Natural killer cell (primary cell): ENCODE measurements at regions of chr5 and their contacts with region 1.

Region 1: GRCh38 chr5:12023614-12024241 is 119.5 kb upstream of the CTNND2 start:
- DNase-seq: peak in 1 of 2 donors; percentile 4
- ATAC-seq: peak in 1 of 3 donors; percentile 35
- H3K4me3 ChIP-seq: no peak overlapping the region
- H3K4me3 Mint-ChIP-seq: no peak overlapping the region
- H3K27ac ChIP-seq: no peak overlapping the region
- H3K27ac Mint-ChIP-seq: no peak overlapping the region
- H3K4me1 ChIP-seq: no peaks in the 10 kb centered on the region
- H3K4me1 Mint-ChIP-seq: no peaks in the 10 kb centered on the region
- H3K27me3 ChIP-seq: no peaks in the 10 kb centered on the region
- H3K27me3 Mint-ChIP-seq: no peaks in the 10 kb centered on the region
- CTCF ChIP-seq: peak; percentile 61

Region 2: GRCh38 chr5:10987930-10988504 is 1035.7 kb before region 1 on chr5:
- intact Hi-C with region 1: loop called (anchors 5 kb)
- DNase-seq: peak; percentile 57 to 62
- ATAC-seq: peak; percentile 63 to 91 (median 65)
- H3K4me3 ChIP-seq: no peak overlapping the region
- H3K4me3 Mint-ChIP-seq: no peak overlapping the region
- H3K27ac ChIP-seq: no peak overlapping the region
- H3K27ac Mint-ChIP-seq: no peak overlapping the region
- H3K4me1 ChIP-seq: peaks cover 7% of the 10 kb centered on the region
- H3K4me1 Mint-ChIP-seq: peaks cover 11 to 16% of the 10 kb centered on the region in 2 donors
- H3K27me3 ChIP-seq: peaks cover 2% of the 10 kb centered on the region
- H3K27me3 Mint-ChIP-seq: peaks cover 19 to 20% of the 10 kb centered on the region in 2 donors
- CTCF ChIP-seq: peak; percentile 70

Region 3: DNA sequence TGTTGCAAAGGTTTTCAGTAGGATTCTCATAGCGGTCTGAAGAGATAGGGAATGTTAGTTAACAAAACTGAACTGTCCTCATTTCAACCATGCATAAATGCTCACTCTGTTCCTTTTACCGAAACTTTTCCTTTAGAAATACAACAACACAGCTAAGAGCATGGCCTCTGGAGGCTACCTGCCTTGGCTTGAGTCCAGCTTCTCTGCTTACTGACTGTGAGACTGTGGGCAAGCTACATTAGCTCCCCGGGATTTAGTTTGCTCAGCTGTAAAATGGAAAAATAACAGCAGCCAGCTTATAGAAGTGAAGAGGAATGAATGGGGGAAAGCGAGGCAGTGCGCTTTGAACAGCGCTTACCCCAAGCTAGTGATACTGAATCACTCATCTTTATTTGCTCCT is 754.8 kb before region 1 on chr5:
- intact Hi-C with region 1: loop called (anchors 10 kb)
- DNase-seq: no peak
- ATAC-seq: no peak
- H3K4me3 ChIP-seq: no peak overlapping the region
- H3K4me3 Mint-ChIP-seq: no peak overlapping the region
- H3K27ac ChIP-seq: no peak overlapping the region
- H3K27ac Mint-ChIP-seq: no peak overlapping the region
- H3K4me1 ChIP-seq: no peaks in the 10 kb centered on the region
- H3K4me1 Mint-ChIP-seq: no peaks in the 10 kb centered on the region
- H3K27me3 ChIP-seq: no peaks in the 10 kb centered on the region
- H3K27me3 Mint-ChIP-seq: peaks cover 5 to 7% of the 10 kb centered on the region in 2 donors
- CTCF ChIP-seq: no peak